ENCODE measurements at regions of chr3 and their contacts with region 1.

Region 1: DNA sequence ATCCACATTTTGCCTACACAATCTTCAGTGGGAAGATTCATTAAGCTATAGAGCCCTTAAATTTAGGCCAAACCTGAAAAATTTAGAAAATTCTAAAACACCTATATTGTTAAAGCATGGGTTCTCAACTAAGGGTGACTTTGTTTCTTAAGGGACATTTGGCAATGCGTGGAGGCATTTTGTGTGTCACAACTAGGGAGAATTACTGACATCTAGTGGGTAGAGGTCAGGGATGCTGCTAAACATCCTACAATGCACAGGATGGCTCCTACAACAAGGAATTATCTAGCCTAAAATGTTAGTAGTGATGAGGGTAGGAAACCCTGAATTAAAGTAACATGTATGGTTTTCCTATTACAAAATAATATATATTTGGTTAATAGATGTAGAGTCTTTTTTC is 55.8 kb downstream of the TBC1D5 start:
- DNase-seq: no peak
- H3K4me3 Mint-ChIP-seq: no peak overlapping the region
- H3K27ac Mint-ChIP-seq: no peak overlapping the region
- H3K4me1 Mint-ChIP-seq: no peaks in the 10 kb centered on the region
- H3K27me3 Mint-ChIP-seq: no peaks in the 10 kb centered on the region

Region 2: DNA sequence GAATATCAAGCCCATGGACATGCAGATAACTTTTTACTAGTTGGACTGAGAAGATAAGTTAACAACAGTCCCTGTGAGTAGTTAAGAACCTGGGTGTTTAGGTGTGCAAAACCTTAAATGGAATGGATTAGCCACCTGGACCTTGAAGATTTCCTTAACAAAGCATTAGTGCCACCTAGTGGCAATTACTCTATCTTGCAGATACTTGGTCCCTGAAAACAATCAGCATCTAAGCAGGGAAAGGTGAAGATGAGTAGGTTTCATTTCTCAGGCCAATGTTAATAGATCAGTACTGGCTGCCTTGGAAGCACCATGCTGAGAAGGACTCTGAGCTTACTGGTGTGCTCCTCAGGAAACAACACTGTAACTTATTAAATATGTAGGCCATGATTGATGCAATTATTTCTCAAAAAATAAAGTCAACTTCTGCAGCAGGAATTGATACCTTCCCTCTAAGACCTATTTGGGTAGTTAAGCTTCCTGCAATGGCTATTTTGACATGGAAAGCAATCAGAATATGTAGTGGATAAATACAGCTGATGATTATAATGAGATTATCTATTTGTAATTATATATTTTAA is 273.6 kb before region 1 on chr3:
- intact Hi-C with region 1: no loop called
- DNase-seq: peak; percentile 78
- H3K4me3 Mint-ChIP-seq: no peak overlapping the region
- H3K27ac Mint-ChIP-seq: no peak overlapping the region
- H3K4me1 Mint-ChIP-seq: no peaks in the 10 kb centered on the region
- H3K27me3 Mint-ChIP-seq: no peaks in the 10 kb centered on the region

Region 3: DNA sequence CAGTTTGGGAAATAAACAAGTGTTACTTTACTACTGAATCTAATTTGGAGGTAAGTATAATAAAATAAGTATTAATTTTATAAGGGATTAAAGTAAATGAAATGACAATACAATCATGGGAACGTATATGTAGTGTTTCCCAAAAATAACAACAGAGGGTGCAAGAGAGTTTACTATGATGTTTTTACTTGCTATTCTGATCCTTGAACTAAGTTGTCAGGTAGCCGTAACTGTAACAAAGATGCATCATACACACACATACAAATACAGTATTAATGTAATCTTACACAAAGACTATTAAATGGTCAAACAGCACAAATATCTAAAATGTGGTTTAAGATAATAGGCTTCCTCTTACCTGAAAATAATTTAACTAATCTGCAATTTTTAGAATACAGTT is 255.6 kb before region 1 on chr3:
- intact Hi-C with region 1: loop called (anchors 2 kb)
- DNase-seq: no peak
- H3K4me3 Mint-ChIP-seq: no peak overlapping the region
- H3K27ac Mint-ChIP-seq: no peak overlapping the region
- H3K4me1 Mint-ChIP-seq: no peaks in the 10 kb centered on the region
- H3K27me3 Mint-ChIP-seq: no peaks in the 10 kb centered on the region